PC-9 (cell line): ENCODE measurements at regions of chr6 and their contacts with region 1.

Region 1: DNA sequence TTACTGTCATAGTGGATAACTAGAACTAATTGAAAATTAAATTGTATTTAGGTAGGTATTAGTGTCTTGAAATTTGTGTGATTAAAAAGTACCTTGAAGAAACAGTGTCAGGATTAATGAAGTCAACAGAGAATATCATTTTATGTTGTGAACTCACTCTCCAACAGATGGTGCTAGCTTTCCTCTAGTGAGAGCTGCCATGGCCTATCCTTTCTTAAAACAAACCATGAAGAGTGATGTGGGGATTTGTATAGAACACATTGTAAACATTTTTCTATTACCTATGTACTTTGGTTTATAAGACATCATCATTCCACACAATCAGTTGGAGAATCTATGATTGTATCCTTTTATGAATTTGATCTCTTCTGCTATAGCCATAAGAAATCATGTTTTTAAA is 4.8 kb upstream of the SRSF12 start:
- DNase-seq: peak in 1 of 2 experiments; percentile 45
- H3K4me3 ChIP-seq: no peak overlapping the region
- H3K27ac ChIP-seq: no peak overlapping the region
- H3K4me1 ChIP-seq: no peaks in the 10 kb centered on the region
- H3K27me3 ChIP-seq: no peaks in the 10 kb centered on the region
- CTCF ChIP-seq: peak; percentile 60

Region 2: DNA sequence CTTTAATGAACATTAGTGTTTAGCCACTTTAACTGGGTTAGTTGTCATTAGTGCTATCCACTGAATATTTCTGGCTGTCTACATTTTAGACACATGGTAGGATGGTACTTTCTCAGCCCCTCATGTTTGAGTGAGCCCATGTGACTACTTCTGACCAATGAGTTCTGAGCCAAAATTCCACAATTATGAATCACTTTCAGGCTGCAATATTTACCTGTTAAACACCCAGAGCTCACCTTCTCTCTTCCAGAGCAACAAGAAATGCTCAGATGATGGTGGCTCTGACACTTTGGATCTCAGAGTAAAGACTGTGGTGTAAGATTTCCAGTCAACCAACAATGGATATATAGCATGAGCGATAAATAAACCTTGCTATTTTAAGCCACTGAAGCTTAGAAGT is 1050.2 kb before region 1 on chr6:
- CTCF ChIA-PET with region 1: interaction called, 12 read pairs
- POLR2A ChIA-PET with region 1: no interaction called
- intact Hi-C with region 1: no loop called
- DNase-seq: no peak
- H3K4me3 ChIP-seq: no peak overlapping the region
- H3K27ac ChIP-seq: no peak overlapping the region
- H3K4me1 ChIP-seq: no peaks in the 10 kb centered on the region
- H3K27me3 ChIP-seq: peaks cover 4% of the 10 kb centered on the region
- CTCF ChIP-seq: no peak

Region 3: DNA sequence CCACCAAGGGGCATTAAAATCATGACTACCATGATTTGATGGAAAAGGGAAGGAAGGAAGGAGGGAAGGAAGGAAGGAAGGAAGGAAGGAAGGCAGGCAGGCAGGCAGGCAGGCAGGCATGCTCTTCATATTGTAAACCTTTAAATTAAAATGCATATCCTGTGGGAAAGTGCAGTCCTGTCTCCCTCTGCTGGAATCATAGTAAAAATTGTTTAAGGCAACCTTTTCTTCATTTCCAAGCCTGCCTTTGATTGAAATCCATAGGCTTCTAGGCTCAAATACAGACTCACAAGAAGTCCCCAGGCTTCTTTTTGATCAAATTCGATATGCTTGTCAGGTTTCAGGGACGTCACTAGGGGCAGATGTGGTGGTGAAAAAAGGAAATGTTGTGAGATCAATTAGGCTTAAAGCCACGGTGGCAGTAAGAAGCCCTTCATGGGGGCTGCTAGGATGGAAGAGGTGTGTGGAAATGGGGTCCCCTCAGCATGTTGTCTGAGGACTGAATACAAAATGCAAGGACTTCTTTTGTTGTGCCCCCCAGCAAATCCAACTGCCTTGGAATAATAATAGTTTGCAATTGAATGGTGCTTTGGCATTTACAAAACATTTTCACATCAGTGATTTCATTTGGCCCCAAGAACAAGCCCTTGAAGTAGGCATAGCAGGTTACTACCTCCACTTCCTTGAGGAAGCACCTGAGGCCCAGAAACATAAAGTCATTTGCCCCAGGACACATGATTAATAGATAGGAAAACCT is 120.1 kb after region 1 on chr6:
- CTCF ChIA-PET with region 1: interaction called, 5 read pairs
- POLR2A ChIA-PET with region 1: no interaction called
- intact Hi-C with region 1: loop called (anchors 1 kb)
- DNase-seq: peak in 1 of 2 experiments; percentile 43
- H3K4me3 ChIP-seq: no peak overlapping the region
- H3K27ac ChIP-seq: peak overlapping the region; percentile 33
- H3K4me1 ChIP-seq: peaks cover 12% of the 10 kb centered on the region; the same call in 1 of the 2 replicates
- H3K27me3 ChIP-seq: no peaks in the 10 kb centered on the region
- CTCF ChIP-seq: peak; percentile 58